ENCODE measurements at regions of chr5 and their contacts with region 1.

Region 1: DNA sequence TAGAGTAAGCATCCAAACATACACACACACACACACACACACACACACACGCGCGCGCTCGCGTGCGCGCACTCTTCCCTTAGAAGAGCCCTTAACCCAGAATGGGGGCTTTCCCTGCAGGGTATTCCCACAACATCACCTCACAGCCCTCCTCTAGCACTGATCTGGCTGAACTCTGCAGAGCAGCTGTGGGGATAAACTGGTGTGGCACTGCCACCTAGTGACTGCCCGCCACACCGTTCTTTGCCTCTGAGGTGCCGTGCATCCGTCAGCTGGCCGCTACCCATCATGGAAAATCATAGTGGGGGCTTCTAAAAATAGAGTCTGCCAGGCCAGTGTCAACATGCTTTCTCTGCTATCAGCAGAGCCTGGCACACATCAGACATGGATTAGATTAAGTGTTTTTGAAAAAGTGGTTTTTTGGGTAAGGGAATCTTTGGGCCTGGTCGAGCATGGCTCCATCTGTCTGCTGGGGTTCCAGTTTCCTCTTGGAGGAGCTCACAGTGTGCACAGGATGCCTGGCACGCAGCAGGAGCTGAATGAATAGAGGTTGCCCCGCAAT is 88.1 kb downstream of the KCNN2 start:
- DNase-seq: no peak
- H3K4me3 ChIP-seq: no peak overlapping the region
- H3K27ac ChIP-seq: peak overlapping the region in 1 of 4 donors; percentile 26
- H3K4me1 ChIP-seq: peaks cover 7 to 13% (median 10%) of the 10 kb centered on the region in 4 donors
- H3K27me3 ChIP-seq: no peaks in the 10 kb centered on the region
- CTCF ChIP-seq: peak; percentile 72 to 84 (median 77)
- EP300 ChIP-seq: no peak
- POLR2A ChIP-seq: no peak

Region 2: GRCh38 chr5:113612060-113612496 is 837.9 kb before region 1 on chr5:
- intact Hi-C with region 1: loop called (anchors 5 kb)
- DNase-seq: no peak
- H3K4me3 ChIP-seq: no peak overlapping the region
- H3K27ac ChIP-seq: no peak overlapping the region
- H3K4me1 ChIP-seq: peaks cover 0 to 4% (median 0%) of the 10 kb centered on the region in 4 donors
- H3K27me3 ChIP-seq: peaks cover 0 to 13% (median 0%) of the 10 kb centered on the region in 4 donors
- CTCF ChIP-seq: peak; percentile 61 to 71 (median 69)
- EP300 ChIP-seq: no peak
- POLR2A ChIP-seq: no peak

Region 3: GRCh38 chr5:113678924-113679575 is 770.9 kb before region 1 on chr5:
- intact Hi-C with region 1: loop called (anchors 2 kb)
- DNase-seq: no peak
- H3K4me3 ChIP-seq: no peak overlapping the region
- H3K27ac ChIP-seq: no peak overlapping the region
- H3K4me1 ChIP-seq: peaks cover 0 to 10% (median 4%) of the 10 kb centered on the region in 4 donors
- H3K27me3 ChIP-seq: no peaks in the 10 kb centered on the region
- CTCF ChIP-seq: peak; percentile 73 to 79 (median 74)
- EP300 ChIP-seq: no peak
- POLR2A ChIP-seq: no peak

Region 4: GRCh38 chr5:113813466-113813865 is 636.5 kb before region 1 on chr5:
- intact Hi-C with region 1: loop called (anchors 10 kb)
- DNase-seq: no peak
- H3K4me3 ChIP-seq: no peak overlapping the region
- H3K27ac ChIP-seq: no peak overlapping the region
- H3K4me1 ChIP-seq: peaks cover 0 to 12% (median 9%) of the 10 kb centered on the region in 4 donors
- H3K27me3 ChIP-seq: no peaks in the 10 kb centered on the region
- CTCF ChIP-seq: no peak
- EP300 ChIP-seq: no peak
- POLR2A ChIP-seq: no peak

Region 5: GRCh38 chr5:114018186-114018585 is 431.8 kb before region 1 on chr5:
- intact Hi-C with region 1: loop called (anchors 10 kb)
- DNase-seq: no peak
- H3K4me3 ChIP-seq: no peak overlapping the region
- H3K27ac ChIP-seq: no peak overlapping the region
- H3K4me1 ChIP-seq: no peaks in the 10 kb centered on the region
- H3K27me3 ChIP-seq: no peaks in the 10 kb centered on the region
- CTCF ChIP-seq: peak; percentile 25 to 38 (median 29)
- EP300 ChIP-seq: no peak
- POLR2A ChIP-seq: no peak

Region 6: GRCh38 chr5:114101153-114101552 is 348.8 kb before region 1 on chr5:
- intact Hi-C with region 1: loop called (anchors 5 kb)
- DNase-seq: no peak
- H3K4me3 ChIP-seq: no peak overlapping the region
- H3K27ac ChIP-seq: no peak overlapping the region
- H3K4me1 ChIP-seq: no peaks in the 10 kb centered on the region
- H3K27me3 ChIP-seq: no peaks in the 10 kb centered on the region
- CTCF ChIP-seq: peak; percentile 41 to 65 (median 57)
- EP300 ChIP-seq: no peak
- POLR2A ChIP-seq: no peak

Measured in esophagus muscularis mucosa (tissue), 4 donors.